ENCODE measurements at regions of chr3 and their contacts with region 1.

Region 1: GRCh38 chr3:156826144-156826895 is at the start of gene LEKR1:
- DNase-seq: peak; percentile 65
- H3K4me3 ChIP-seq: peak within 1 kb of the TSS; percentile 51 to 71
- H3K27ac ChIP-seq: peak within 1 kb of the TSS; percentile 91 to 97
- H3K4me1 ChIP-seq: no peaks in the 10 kb centered on the region
- H3K27me3 ChIP-seq: no peaks in the 10 kb centered on the region
- CTCF ChIP-seq: peak in 1 of 4 experiments; percentile 29
- POLR2A ChIP-seq: peak; percentile 64
- total RNA-seq, gene LEKR1: 2.2 to 4.4 TPM

Region 2: GRCh38 chr3:156939315-156939714 is 113.0 kb after region 1 on chr3:
- intact Hi-C with region 1: no loop called
- DNase-seq: no peak
- H3K4me3 ChIP-seq: no peak overlapping the region
- H3K27ac ChIP-seq: no peak overlapping the region
- H3K4me1 ChIP-seq: no peaks in the 10 kb centered on the region
- H3K27me3 ChIP-seq: no peaks in the 10 kb centered on the region
- CTCF ChIP-seq: no peak
- POLR2A ChIP-seq: no peak

Region 3: GRCh38 chr3:157081681-157082210 is 255.4 kb after region 1 on chr3:
- intact Hi-C with region 1: loop called (anchors 5 kb)
- DNase-seq: peak; percentile 87
- H3K4me3 ChIP-seq: no peak overlapping the region
- H3K27ac ChIP-seq: peak overlapping the region; percentile 34 to 75
- H3K4me1 ChIP-seq: peaks cover 6% of the 10 kb centered on the region
- H3K27me3 ChIP-seq: no peaks in the 10 kb centered on the region
- CTCF ChIP-seq: peak; percentile 97 to 99 (median 98)
- POLR2A ChIP-seq: peak; percentile 70